ENCODE measurements at regions of chr20 and their contacts with region 1.

Region 1: DNA sequence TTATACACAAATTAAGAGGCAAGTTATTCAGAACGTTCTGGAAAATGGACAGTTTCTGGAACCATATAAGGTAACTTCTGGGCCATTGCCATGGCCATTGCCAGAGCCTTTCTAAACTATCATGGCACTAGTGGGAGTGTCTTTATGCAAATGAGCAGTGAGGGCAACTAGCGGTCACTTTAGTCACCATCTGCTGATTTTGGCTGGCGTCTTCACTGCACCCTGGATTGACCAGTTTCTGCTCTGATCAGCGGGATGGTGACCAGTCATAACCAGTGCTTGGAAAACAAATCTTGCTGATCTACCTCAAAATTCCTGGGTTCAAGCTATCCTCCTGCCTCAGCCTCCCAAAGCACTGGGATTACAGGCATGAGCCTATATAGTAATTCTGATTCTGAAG is 7.3 kb upstream of the SNTA1 start:
- DNase-seq: no peak
- H3K4me3 ChIP-seq: no peak overlapping the region
- H3K27ac ChIP-seq: no peak overlapping the region
- H3K4me1 ChIP-seq: no peaks in the 10 kb centered on the region
- H3K27me3 ChIP-seq: no peaks in the 10 kb centered on the region
- CTCF ChIP-seq: no peak
- EP300 ChIP-seq: no peak
- POLR2A ChIP-seq: no peak

Region 2: DNA sequence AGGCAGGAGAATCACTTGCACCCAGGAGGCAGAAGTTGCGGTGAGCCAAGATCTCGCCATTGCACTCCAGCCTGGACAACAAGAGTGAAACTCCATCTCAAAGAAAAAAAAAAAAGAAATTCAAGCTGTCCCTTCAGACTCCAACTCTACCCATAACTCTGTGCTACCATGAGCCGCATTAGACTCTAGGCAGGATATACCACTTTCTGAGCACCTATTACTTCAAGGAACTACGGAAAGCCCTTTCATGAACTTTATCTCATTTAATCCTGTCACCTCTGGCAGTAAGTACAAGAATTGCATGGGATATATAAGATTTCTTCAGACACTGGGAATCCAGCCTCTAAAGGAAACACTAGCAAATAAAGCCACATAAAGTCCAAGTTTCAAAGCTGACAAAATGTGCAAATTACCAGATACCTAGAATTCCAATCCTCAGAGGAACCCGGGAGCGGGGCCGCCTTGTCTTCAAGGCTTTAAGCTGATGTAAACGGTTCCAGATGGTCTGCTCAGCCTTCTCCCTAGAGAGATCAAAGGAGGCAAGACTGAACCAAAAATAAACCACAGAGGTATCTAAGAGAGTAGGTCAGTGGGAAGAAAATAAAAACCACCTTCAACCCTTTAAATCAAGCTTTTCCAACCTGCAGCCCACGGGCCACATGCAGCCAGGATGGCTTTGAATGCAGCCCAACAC is 59.0 kb before region 1 on chr20:
- intact Hi-C with region 1: no loop called
- DNase-seq: no peak
- H3K4me3 ChIP-seq: no peak overlapping the region
- H3K27ac ChIP-seq: no peak overlapping the region
- H3K4me1 ChIP-seq: peaks cover 0 to 5% (median 0%) of the 10 kb centered on the region in 4 donors
- H3K27me3 ChIP-seq: no peaks in the 10 kb centered on the region
- CTCF ChIP-seq: no peak
- EP300 ChIP-seq: no peak
- POLR2A ChIP-seq: no peak

Region 3: GRCh38 chr20:33609504-33609903 is 158.6 kb after region 1 on chr20:
- intact Hi-C with region 1: no loop called
- DNase-seq: no peak
- H3K4me3 ChIP-seq: no peak overlapping the region
- H3K27ac ChIP-seq: no peak overlapping the region
- H3K4me1 ChIP-seq: peaks cover 0 to 7% (median 4%) of the 10 kb centered on the region in 4 donors
- H3K27me3 ChIP-seq: no peaks in the 10 kb centered on the region
- CTCF ChIP-seq: no peak
- EP300 ChIP-seq: no peak
- POLR2A ChIP-seq: no peak

Region 4: DNA sequence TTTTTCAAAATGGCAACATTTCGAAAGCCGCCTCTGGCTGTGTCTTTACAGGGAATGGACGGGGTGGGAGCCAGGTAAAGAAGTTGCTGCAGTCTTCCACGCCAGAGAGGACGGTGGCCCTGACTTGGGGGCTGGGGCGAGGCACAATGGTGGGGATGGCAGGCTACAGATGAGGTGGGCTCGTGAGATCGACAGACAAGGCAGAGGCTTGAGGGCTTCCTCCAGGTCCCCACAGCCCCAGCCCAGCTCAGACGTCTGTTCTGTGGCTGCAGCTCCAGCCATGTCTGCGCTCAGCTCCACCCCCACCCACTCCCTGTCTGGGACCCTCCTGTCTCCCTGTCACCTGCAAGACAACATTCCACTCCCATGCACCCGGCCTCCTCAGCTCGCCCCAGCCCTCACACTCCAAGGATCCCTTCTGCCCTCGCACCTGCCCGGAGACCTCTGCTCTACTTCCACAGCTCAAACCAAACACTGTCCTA is 203.9 kb after region 1 on chr20:
- intact Hi-C with region 1: loop called (anchors 5 kb)
- DNase-seq: peak in 1 of 2 donors; percentile 62
- H3K4me3 ChIP-seq: no peak overlapping the region
- H3K27ac ChIP-seq: peak overlapping the region; percentile 65 to 80 (median 70)
- H3K4me1 ChIP-seq: peaks cover 33 to 48% (median 43%) of the 10 kb centered on the region in 4 donors
- H3K27me3 ChIP-seq: no peaks in the 10 kb centered on the region
- CTCF ChIP-seq: no peak
- EP300 ChIP-seq: no peak
- POLR2A ChIP-seq: no peak

Measured in stomach (tissue), 19 donors.